ENCODE measurements at regions of chr15 and their contacts with region 1.

Region 1: DNA sequence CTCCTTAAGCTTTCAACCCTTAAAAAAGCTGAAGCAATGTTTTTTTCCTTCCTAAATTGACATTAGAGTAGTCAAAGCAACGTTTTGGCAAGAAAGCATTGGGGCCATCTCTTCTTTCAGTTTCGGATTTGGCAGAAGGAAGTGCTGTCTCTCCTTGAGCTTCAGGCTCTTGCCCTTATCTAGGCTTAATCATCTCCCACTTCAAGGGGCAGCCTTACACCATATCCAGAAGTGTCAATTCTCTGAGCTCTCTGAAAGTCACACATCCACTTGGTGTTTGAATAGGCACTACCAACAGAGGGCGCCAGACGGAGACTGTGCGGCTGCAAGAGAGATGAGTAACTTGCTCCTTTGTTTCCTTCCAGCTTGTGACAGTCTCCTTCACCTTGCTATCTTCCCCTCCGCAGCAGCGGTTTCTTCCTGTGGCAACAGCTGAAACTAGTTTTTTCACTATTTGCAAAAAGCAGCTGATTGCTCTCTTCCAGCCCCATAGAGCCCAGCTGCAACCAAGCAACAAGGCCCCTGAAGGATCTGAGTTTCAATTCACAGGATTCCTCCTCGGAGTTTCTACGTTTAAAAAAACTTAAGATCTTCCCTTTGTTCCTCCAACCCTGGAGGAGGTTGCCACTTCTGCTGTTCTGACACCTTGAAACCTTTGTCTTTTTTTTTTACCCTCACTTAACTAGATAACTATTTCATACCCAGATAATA is 147.0 kb upstream of the SLCO3A1 start:
- DNase-seq: peak; percentile 93
- ATAC-seq: peak; percentile 99
- H3K4me3 Mint-ChIP-seq: peak overlapping the region; percentile 9
- H3K27ac Mint-ChIP-seq: no peak overlapping the region
- H3K4me1 Mint-ChIP-seq: peaks cover 17% of the 10 kb centered on the region
- H3K27me3 Mint-ChIP-seq: peaks cover 12% of the 10 kb centered on the region

Region 2: GRCh38 chr15:91311986-91312385 is 394.5 kb before region 1 on chr15:
- CTCF ChIA-PET with region 1: interaction called, 3 read pairs
- POLR2A ChIA-PET with region 1: no interaction called
- intact Hi-C with region 1: loop called in 1 of 2 experiments (anchors 5 kb)
- DNase-seq: no peak
- ATAC-seq: no peak
- H3K4me3 Mint-ChIP-seq: no peak overlapping the region
- H3K27ac Mint-ChIP-seq: no peak overlapping the region
- H3K4me1 Mint-ChIP-seq: peaks cover 38% of the 10 kb centered on the region
- H3K27me3 Mint-ChIP-seq: peaks cover 7% of the 10 kb centered on the region

Region 3: GRCh38 chr15:91469632-91470567 is 236.6 kb before region 1 on chr15:
- CTCF ChIA-PET with region 1: no interaction called
- POLR2A ChIA-PET with region 1: no interaction called
- intact Hi-C with region 1: loop called in 1 of 2 experiments (anchors 5 kb)
- DNase-seq: peak; percentile 77
- ATAC-seq: peak; percentile 76
- H3K4me3 Mint-ChIP-seq: peak overlapping the region; percentile 43
- H3K27ac Mint-ChIP-seq: peak overlapping the region; percentile 89
- H3K4me1 Mint-ChIP-seq: peaks cover 43% of the 10 kb centered on the region
- H3K27me3 Mint-ChIP-seq: peaks cover 3% of the 10 kb centered on the region

Region 4: DNA sequence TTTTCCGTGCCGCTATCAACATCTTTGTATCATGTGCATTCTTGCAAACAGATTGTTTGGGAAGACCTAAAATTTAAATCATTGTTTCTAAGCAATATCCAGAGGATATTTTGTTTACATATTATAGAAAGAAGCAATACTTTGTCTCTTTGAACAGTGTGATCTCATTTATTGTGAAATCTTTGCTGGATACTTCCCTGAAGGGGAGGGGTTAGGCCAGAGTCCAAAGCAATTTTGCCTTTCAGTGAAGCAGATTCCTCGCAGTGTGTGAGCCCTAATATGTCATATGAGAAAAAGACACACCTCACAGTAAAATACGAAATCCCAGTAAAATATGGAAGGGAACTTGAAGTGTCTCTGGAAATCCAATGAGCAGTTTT is 11.7 kb before region 1 on chr15:
- CTCF ChIA-PET with region 1: interaction called, 25 read pairs
- POLR2A ChIA-PET with region 1: interaction called, 4 read pairs
- intact Hi-C with region 1: no loop called
- DNase-seq: no peak
- ATAC-seq: no peak
- H3K4me3 Mint-ChIP-seq: no peak overlapping the region
- H3K27ac Mint-ChIP-seq: no peak overlapping the region
- H3K4me1 Mint-ChIP-seq: no peaks in the 10 kb centered on the region
- H3K27me3 Mint-ChIP-seq: no peaks in the 10 kb centered on the region

Region 5: DNA sequence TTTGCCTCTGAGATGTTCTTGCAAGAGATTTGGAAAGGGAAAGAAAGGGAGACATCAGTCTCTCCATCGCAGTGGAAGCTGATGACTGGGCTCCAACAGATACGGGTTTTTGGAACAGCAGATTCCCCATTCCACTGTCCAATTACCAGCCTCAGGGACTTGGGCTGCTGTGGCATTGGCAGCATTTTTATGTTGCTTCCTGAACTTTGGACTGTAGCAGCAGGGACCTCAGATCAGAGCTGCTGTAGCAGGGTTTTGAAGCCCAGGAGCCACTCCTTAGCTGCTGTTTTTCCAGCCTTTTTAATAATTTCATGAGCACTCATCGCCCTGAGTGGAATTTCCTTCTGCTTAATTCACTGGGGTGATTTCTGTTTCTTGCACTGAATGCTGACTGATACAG is 11.3 kb after region 1 on chr15:
- CTCF ChIA-PET with region 1: interaction called, 12 read pairs
- POLR2A ChIA-PET with region 1: no interaction called
- intact Hi-C with region 1: no loop called
- DNase-seq: no peak
- ATAC-seq: no peak
- H3K4me3 Mint-ChIP-seq: no peak overlapping the region
- H3K27ac Mint-ChIP-seq: no peak overlapping the region
- H3K4me1 Mint-ChIP-seq: no peaks in the 10 kb centered on the region
- H3K27me3 Mint-ChIP-seq: peaks cover 11% of the 10 kb centered on the region

Region 6: GRCh38 chr15:91942676-91943576 is 236.4 kb after region 1 on chr15:
- CTCF ChIA-PET with region 1: interaction called, 12 read pairs
- POLR2A ChIA-PET with region 1: no interaction called
- intact Hi-C with region 1: loop called in 1 of 2 experiments (anchors 2 kb)
- DNase-seq: peak; percentile 63
- ATAC-seq: peak; percentile 65
- H3K4me3 Mint-ChIP-seq: no peak overlapping the region
- H3K27ac Mint-ChIP-seq: peak overlapping the region; percentile 32
- H3K4me1 Mint-ChIP-seq: peaks cover 48% of the 10 kb centered on the region
- H3K27me3 Mint-ChIP-seq: no peaks in the 10 kb centered on the region

Region 7: DNA sequence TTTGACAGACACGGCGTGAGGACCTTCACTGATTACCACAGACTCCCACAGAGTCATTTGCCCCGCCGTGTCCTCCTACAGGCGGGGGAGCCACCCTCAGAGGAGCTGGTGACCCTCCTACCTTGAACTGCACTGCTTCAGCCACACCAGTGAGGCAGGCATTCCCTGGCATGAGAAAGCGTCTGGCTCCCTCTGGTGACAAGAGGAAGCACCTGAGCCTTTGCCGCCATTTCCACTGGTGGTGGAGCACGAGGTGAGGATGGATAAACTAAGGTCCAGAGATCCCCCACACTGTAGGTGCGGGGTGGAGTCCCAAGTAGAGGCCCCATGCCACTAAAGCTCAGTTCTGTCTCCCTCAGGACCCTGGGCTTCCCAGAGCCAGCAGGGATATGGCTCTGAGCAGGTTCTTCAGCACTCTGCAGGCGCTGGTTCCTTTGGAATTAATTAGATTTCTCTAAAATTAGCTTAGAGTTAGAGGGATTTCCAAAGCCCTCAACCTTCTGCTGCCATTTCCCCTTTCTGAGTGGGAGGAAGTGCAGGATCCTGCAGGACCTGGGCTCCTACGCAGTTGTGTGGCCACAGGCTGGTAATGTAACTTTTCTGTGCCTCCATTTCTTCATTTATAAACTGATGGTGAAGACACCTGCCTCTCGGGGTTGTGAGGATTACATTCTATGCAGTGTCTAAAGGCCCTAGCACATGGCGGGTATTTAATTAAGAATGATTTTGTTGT is 371.0 kb after region 1 on chr15:
- CTCF ChIA-PET with region 1: interaction called, 27 read pairs
- POLR2A ChIA-PET with region 1: no interaction called
- intact Hi-C with region 1: loop called (anchors 1 kb)
- DNase-seq: peak; percentile 86
- ATAC-seq: peak; percentile 87
- H3K4me3 Mint-ChIP-seq: no peak overlapping the region
- H3K27ac Mint-ChIP-seq: no peak overlapping the region
- H3K4me1 Mint-ChIP-seq: peaks cover 23% of the 10 kb centered on the region
- H3K27me3 Mint-ChIP-seq: no peaks in the 10 kb centered on the region

Measured in activated CD4-positive, alpha-beta T cell treated with anti-CD3 and anti-CD28 coated beads for 36 hours (primary cell).